ENCODE measurements at regions of chr16 and their contacts with region 1.

Region 1: GRCh38 chr16:71564155-71564967 is 12.5 kb downstream of the TAT start:
- DNase-seq: no peak
- H3K4me3 Mint-ChIP-seq: peak overlapping the region; percentile 84
- H3K27ac Mint-ChIP-seq: peak overlapping the region; percentile 90
- H3K4me1 Mint-ChIP-seq: peaks cover 19% of the 10 kb centered on the region
- H3K27me3 Mint-ChIP-seq: peaks cover 6% of the 10 kb centered on the region

Region 2: GRCh38 chr16:71542377-71542776 is 22.0 kb before region 1 on chr16:
- CTCF ChIA-PET with region 1: interaction called, 10 read pairs
- POLR2A ChIA-PET with region 1: interaction called, 3 read pairs
- DNase-seq: peak; percentile 71
- H3K4me3 Mint-ChIP-seq: no peak overlapping the region
- H3K27ac Mint-ChIP-seq: no peak overlapping the region
- H3K4me1 Mint-ChIP-seq: peaks cover 3% of the 10 kb centered on the region
- H3K27me3 Mint-ChIP-seq: peaks cover 2% of the 10 kb centered on the region

Region 3: GRCh38 chr16:71645453-71645852 is 81.1 kb after region 1 on chr16:
- CTCF ChIA-PET with region 1: interaction called, 13 read pairs
- POLR2A ChIA-PET with region 1: no interaction called
- DNase-seq: no peak
- H3K4me3 Mint-ChIP-seq: no peak overlapping the region
- H3K27ac Mint-ChIP-seq: no peak overlapping the region
- H3K4me1 Mint-ChIP-seq: no peaks in the 10 kb centered on the region
- H3K27me3 Mint-ChIP-seq: no peaks in the 10 kb centered on the region

Region 4: GRCh38 chr16:71961066-71962039 is 397.0 kb after region 1 on chr16:
- CTCF ChIA-PET with region 1: interaction called, 19 read pairs
- POLR2A ChIA-PET with region 1: no interaction called
- DNase-seq: peak; percentile 85
- H3K4me3 Mint-ChIP-seq: no peak overlapping the region
- H3K27ac Mint-ChIP-seq: no peak overlapping the region
- H3K4me1 Mint-ChIP-seq: peaks cover 15% of the 10 kb centered on the region
- H3K27me3 Mint-ChIP-seq: peaks cover 7% of the 10 kb centered on the region

Measured in activated CD4-positive, alpha-beta memory T cell treated with anti-CD3 and anti-CD28 coated beads, Interleukin-2, amount 10 ng/mL, durations not matched to agents 7 days and 5 days (primary cell).